ENCODE measurements at regions of chr2 and their contacts with region 1.

Region 1: DNA sequence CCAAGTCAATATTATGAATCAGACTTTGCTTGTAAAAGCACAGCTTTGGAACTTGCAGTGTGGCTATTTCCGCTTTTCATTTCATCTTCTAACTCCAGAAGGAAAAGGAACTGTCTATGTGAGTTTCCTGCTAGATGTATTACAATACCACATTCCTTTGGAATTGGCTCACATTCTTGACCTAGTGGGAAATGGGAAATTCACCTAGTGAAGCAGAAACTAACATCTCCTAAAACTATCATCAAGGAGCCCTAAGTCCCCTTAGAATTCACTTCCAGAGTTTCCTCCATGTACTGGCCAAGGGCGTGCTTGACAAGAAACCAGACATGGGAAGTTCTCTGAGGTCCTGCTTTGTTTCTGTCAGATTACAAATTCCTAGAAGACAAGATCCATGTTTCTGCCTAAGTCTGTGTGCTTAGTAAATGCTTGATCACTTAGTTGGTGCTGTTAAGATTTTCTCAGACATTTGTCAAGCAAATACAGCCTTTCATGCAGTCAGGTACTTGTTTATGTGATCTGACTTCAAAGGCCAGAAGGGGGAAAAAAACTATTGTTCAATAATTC is 275.7 kb upstream of the FN1 start:
- DNase-seq: no peak
- H3K4me3 ChIP-seq: no peak overlapping the region
- H3K27ac ChIP-seq: no peak overlapping the region
- H3K4me1 ChIP-seq: no peaks in the 10 kb centered on the region
- H3K27me3 ChIP-seq: no peaks in the 10 kb centered on the region
- CTCF ChIP-seq: no peak
- POLR2A ChIP-seq: no peak

Region 2: DNA sequence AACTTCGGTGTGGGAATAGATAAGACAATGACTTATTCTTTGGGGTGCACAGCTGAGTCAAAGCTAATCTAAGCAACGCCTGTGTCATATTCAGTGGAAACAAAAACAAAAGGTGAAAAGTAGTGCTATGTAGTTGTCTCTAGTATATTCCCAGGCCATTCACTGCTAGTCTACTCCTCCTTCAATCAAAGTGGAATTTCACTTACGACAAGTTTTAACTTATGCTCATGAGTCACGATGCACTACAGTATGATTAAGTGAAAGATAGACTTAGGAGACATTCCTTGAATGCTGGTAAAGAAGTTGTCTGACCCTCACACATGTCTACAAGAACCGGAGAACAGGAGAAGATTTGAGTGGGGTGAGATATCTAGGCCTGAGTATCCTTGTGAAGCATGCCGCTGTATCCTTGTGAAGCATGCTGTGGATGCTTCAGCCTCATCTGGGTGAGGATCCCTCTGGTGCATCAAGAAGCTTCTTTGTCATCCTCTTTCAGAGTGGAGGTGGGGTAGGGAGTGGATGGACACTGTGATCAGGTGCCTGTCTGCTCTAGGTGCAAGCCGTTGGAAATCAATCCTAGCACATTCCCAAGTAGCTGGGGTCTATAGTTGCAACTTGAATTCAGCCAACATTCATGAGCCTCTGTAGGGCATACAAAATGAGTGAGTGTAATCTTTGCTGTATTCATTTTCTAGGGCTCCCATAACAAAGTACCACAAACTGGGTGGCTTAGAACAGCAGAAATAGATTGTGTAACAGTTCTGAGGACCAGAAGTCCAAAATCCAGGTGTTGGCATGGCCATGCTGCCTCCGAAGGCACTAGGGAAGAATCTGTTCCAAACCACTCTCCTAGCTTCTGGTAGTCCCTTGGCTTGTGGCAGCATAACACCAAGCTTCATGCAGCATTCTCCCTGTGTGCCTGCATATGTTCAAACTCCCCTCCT is 102.2 kb before region 1 on chr2:
- intact Hi-C with region 1: no loop called
- DNase-seq: no peak
- H3K4me3 ChIP-seq: no peak overlapping the region
- H3K27ac ChIP-seq: no peak overlapping the region
- H3K4me1 ChIP-seq: no peaks in the 10 kb centered on the region
- H3K27me3 ChIP-seq: no peaks in the 10 kb centered on the region
- CTCF ChIP-seq: no peak
- POLR2A ChIP-seq: no peak

Region 3: DNA sequence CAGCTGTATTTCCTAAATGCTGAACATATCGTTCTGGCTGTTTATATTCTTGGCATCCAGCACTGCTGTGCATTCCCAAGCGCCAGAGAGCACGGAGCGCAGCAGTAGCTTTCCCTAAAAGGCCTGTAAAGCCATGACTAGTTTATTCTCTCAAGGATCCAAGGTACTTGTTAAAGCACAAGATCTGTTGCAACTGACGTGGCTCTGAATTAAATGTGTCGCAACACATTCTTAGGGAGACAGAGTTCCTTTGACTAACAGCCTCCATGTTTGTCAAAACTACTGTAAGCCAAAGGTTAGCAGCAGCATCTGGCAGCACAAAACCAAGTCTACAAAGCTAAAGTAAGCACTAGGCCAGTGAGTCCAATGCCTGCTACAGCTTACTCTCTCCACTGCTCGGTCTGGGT is 87.1 kb before region 1 on chr2:
- intact Hi-C with region 1: loop called (anchors 5 kb)
- DNase-seq: peak; percentile 45
- H3K4me3 ChIP-seq: no peak overlapping the region
- H3K27ac ChIP-seq: peak overlapping the region; percentile 36 to 40
- H3K4me1 ChIP-seq: no peaks in the 10 kb centered on the region
- H3K27me3 ChIP-seq: no peaks in the 10 kb centered on the region
- CTCF ChIP-seq: no peak
- POLR2A ChIP-seq: no peak